ENCODE measurements at regions of chr6 and their contacts with region 1.

Region 1: DNA sequence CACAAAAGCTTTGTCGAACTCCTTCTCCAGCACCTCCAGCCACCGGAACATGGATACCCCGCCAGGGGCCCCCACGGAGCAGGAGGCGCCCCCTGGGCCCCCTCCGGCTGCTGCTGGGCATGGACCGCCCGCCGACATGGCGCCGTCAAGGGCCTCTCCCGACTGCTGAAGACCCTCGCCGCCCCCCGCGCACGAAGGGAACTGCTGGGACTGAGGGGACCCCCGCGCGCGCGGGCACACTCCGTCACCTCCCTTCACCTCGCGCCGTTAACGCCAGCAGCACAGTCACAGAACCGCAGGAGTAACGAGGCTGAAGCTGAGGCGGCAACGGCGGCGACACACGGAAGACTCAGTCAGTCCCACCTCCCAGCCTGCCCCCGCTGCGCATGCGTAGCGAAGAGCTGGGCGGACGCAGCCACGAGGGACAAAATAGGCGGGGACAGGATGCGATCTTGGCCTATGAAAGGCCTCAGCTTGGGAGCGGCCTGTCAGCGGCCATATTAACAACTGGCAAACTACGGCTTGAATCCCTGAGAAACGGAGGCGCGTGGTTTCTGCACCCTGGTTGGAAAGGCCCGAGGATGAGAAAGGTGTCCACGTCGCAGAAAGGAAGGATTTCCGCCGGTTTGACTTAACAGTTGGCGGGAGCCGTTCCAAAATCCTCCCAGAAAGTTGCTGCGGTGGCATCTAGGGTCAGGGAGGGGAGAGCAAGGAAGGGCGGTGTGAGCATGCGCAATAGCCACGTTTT is at the start of gene GOPC:
- DNase-seq: peak; percentile 95
- ATAC-seq: peak; percentile 95
- H3K4me3 Mint-ChIP-seq: peak within 1 kb of the TSS; percentile 98
- H3K27ac Mint-ChIP-seq: peak within 1 kb of the TSS; percentile 98
- H3K4me1 Mint-ChIP-seq: peaks cover 23% of the 10 kb centered on the region
- H3K27me3 Mint-ChIP-seq: peaks cover 1% of the 10 kb centered on the region
- CTCF ChIP-seq: no peak
- total RNA-seq, gene GOPC: 14.8 to 16.1 TPM

Region 2: GRCh38 chr6:117449549-117450439 is 152.5 kb before region 1 on chr6:
- CTCF ChIA-PET with region 1: interaction called, 103 read pairs
- POLR2A ChIA-PET with region 1: no interaction called
- intact Hi-C with region 1: loop called (anchors 5 kb)
- DNase-seq: peak; percentile 79
- ATAC-seq: no peak
- H3K4me3 Mint-ChIP-seq: no peak overlapping the region
- H3K27ac Mint-ChIP-seq: no peak overlapping the region
- H3K4me1 Mint-ChIP-seq: no peaks in the 10 kb centered on the region
- H3K27me3 Mint-ChIP-seq: peaks cover 23% of the 10 kb centered on the region
- CTCF ChIP-seq: peak; percentile 86

Region 3: GRCh38 chr6:117547688-117548621 is 54.4 kb before region 1 on chr6:
- CTCF ChIA-PET with region 1: interaction called, 36 read pairs
- POLR2A ChIA-PET with region 1: interaction called, 12 read pairs
- intact Hi-C with region 1: loop called (anchors 5 kb)
- DNase-seq: peak; percentile 66
- ATAC-seq: peak; percentile 47
- H3K4me3 Mint-ChIP-seq: peak overlapping the region; percentile 77
- H3K27ac Mint-ChIP-seq: peak overlapping the region; percentile 84
- H3K4me1 Mint-ChIP-seq: peaks cover 39% of the 10 kb centered on the region
- H3K27me3 Mint-ChIP-seq: peaks cover 2% of the 10 kb centered on the region
- CTCF ChIP-seq: no peak

Region 4: DNA sequence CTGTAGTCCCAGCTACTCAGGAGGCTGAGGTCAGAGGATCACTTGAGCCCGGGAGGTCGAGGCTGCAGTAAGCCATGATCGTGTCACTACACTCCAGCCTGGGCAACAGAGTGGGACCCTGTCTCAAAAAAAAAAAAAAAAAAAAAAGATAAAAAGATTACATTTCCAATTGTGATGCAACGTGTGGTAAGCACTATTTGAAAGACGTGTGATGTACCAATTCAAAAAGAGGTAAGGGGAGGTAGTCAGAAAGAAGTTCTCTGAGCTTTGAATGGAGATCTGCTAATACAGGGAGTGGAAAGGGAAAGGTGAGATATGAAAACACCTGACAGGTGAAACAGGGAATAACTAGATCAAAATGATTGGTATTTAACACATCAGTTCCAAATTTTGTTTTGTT is 11.9 kb before region 1 on chr6:
- CTCF ChIA-PET with region 1: interaction called, 3 read pairs
- POLR2A ChIA-PET with region 1: interaction called, 10 read pairs
- intact Hi-C with region 1: no loop called
- DNase-seq: no peak
- ATAC-seq: no peak
- H3K4me3 Mint-ChIP-seq: no peak overlapping the region
- H3K27ac Mint-ChIP-seq: no peak overlapping the region
- H3K4me1 Mint-ChIP-seq: peaks cover 22% of the 10 kb centered on the region
- H3K27me3 Mint-ChIP-seq: no peaks in the 10 kb centered on the region
- CTCF ChIP-seq: no peak

Region 5: GRCh38 chr6:117642976-117643375 is 40.7 kb after region 1 on chr6:
- CTCF ChIA-PET with region 1: no interaction called
- POLR2A ChIA-PET with region 1: no interaction called
- intact Hi-C with region 1: no loop called
- DNase-seq: no peak
- ATAC-seq: no peak
- H3K4me3 Mint-ChIP-seq: no peak overlapping the region
- H3K27ac Mint-ChIP-seq: no peak overlapping the region
- H3K4me1 Mint-ChIP-seq: no peaks in the 10 kb centered on the region
- H3K27me3 Mint-ChIP-seq: peaks cover 2% of the 10 kb centered on the region
- CTCF ChIP-seq: no peak

Region 6: GRCh38 chr6:117653949-117654348 is 51.6 kb after region 1 on chr6:
- CTCF ChIA-PET with region 1: no interaction called
- POLR2A ChIA-PET with region 1: no interaction called
- intact Hi-C with region 1: no loop called
- DNase-seq: no peak
- ATAC-seq: no peak
- H3K4me3 Mint-ChIP-seq: no peak overlapping the region
- H3K27ac Mint-ChIP-seq: no peak overlapping the region
- H3K4me1 Mint-ChIP-seq: peaks cover 9% of the 10 kb centered on the region
- H3K27me3 Mint-ChIP-seq: no peaks in the 10 kb centered on the region
- CTCF ChIP-seq: no peak

Region 7: GRCh38 chr6:117674991-117675657 is 72.8 kb after region 1 on chr6 and contains the start of gene NUS1:
- CTCF ChIA-PET with region 1: interaction called, 3 read pairs
- POLR2A ChIA-PET with region 1: interaction called, 3 read pairs
- intact Hi-C with region 1: loop called (anchors 5 kb)
- DNase-seq: peak; percentile 98
- ATAC-seq: peak; percentile 97
- H3K4me3 Mint-ChIP-seq: peak within 1 kb of the TSS; percentile 95
- H3K27ac Mint-ChIP-seq: peak within 1 kb of the TSS; percentile 96
- H3K4me1 Mint-ChIP-seq: peaks cover 43% of the 10 kb centered on the region
- H3K27me3 Mint-ChIP-seq: no peaks in the 10 kb centered on the region
- CTCF ChIP-seq: peak; percentile 68
- total RNA-seq, gene NUS1: 42.2 to 42.8 TPM

Region 8: DNA sequence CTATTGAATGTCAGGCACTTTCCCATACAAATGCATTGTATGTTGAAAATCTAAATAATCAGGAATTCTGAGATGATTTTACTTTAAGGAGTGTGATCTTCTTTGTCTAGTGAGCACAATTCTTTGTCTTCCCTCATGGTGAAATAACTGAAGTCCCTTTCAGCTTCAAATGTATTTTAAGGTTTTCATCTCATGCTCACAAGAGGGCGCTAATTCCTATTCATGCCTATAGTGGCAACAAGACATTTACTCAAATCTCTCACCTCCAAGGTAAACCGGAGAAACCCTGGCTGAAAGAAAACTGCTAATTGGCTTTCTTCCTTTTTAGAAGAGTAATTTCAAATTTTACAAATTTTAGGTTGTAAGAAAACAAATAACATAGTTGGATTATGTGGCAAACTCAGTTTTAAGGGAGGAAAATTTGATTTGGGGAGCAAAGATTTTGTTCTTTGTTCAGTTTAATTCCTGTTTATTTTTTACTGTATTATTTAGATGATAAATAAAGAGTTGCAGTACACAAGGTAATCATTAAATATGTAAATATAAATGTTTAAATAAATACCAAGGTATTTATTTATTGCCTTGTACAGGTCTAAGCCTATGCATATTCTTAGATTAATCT is 373.8 kb after region 1 on chr6:
- CTCF ChIA-PET with region 1: no interaction called
- POLR2A ChIA-PET with region 1: no interaction called
- intact Hi-C with region 1: no loop called
- DNase-seq: peak; percentile 5
- ATAC-seq: no peak
- H3K4me3 Mint-ChIP-seq: no peak overlapping the region
- H3K27ac Mint-ChIP-seq: no peak overlapping the region
- H3K4me1 Mint-ChIP-seq: no peaks in the 10 kb centered on the region
- H3K27me3 Mint-ChIP-seq: peaks cover 7% of the 10 kb centered on the region
- CTCF ChIP-seq: peak; percentile 75